Thyroid gland (tissue), 4 donors: ENCODE measurements at regions of chr16 and their contacts with region 1.

Region 1: GRCh38 chr16:84511180-84511824 is 6.8 kb upstream of the MEAK7 start:
- DNase-seq: peak; percentile 77 to 88
- H3K4me3 ChIP-seq: no peak overlapping the region
- H3K27ac ChIP-seq: no peak overlapping the region
- H3K4me1 ChIP-seq: no peaks in the 10 kb centered on the region
- H3K27me3 ChIP-seq: no peaks in the 10 kb centered on the region
- CTCF ChIP-seq: peak; percentile 88 to 96 (median 96)
- POLR2A ChIP-seq: no peak

Region 2: GRCh38 chr16:84323621-84324020 is 187.7 kb before region 1 on chr16:
- intact Hi-C with region 1: no loop called
- DNase-seq: no peak
- H3K4me3 ChIP-seq: no peak overlapping the region
- H3K27ac ChIP-seq: no peak overlapping the region
- H3K4me1 ChIP-seq: no peaks in the 10 kb centered on the region
- H3K27me3 ChIP-seq: no peaks in the 10 kb centered on the region
- CTCF ChIP-seq: no peak
- POLR2A ChIP-seq: no peak

Region 3: DNA sequence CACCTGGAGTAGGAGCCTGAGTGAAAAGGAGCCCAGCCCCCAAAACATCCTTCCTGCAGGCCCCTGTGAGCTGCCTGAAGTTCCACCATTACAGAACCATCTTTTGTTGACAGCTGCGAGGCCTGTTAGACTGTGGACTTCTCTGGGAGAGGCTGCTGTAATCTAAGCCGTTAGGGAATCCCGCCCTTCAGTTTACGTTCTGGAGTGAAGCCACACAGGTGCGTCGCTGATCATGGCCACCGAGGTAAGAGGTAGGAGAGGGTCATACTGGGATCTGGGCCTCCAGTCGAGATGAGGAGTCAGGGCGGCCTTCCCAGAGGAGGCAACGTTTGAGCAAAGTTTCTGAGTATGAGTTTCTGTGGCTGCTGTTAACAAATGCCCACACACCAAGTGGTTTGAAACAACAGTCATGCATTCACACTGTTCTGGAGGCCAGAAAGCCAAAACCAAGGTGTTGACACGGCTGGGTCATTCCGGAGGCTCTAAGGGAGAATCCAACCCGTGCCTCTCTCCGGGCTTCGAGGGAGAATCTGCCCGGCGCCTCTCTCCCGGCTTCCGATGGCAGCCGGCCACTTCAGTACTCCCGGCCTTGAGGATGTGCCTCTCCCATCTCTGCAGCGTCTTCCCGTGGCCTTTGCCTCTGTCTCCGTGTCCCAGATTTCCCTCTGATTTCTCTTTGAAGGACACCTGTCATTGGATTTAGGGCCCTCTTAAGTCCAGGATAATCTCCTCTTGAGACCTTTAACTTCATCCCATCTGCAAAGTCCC is 169.6 kb before region 1 on chr16:
- intact Hi-C with region 1: no loop called
- DNase-seq: no peak
- H3K4me3 ChIP-seq: no peak overlapping the region
- H3K27ac ChIP-seq: no peak overlapping the region
- H3K4me1 ChIP-seq: no peaks in the 10 kb centered on the region
- H3K27me3 ChIP-seq: no peaks in the 10 kb centered on the region
- CTCF ChIP-seq: no peak
- POLR2A ChIP-seq: no peak

Region 4: GRCh38 chr16:84459941-84460405 is 51.3 kb before region 1 on chr16:
- intact Hi-C with region 1: no loop called
- DNase-seq: no peak
- H3K4me3 ChIP-seq: no peak overlapping the region
- H3K27ac ChIP-seq: no peak overlapping the region
- H3K4me1 ChIP-seq: no peaks in the 10 kb centered on the region
- H3K27me3 ChIP-seq: no peaks in the 10 kb centered on the region
- CTCF ChIP-seq: no peak
- POLR2A ChIP-seq: no peak

Region 5: GRCh38 chr16:84548971-84549844 is 37.9 kb after region 1 on chr16:
- intact Hi-C with region 1: no loop called
- DNase-seq: peak in 1 of 2 donors; percentile 26
- H3K4me3 ChIP-seq: no peak overlapping the region
- H3K27ac ChIP-seq: peak overlapping the region; percentile 47 to 65 (median 56)
- H3K4me1 ChIP-seq: no peaks in the 10 kb centered on the region
- H3K27me3 ChIP-seq: no peaks in the 10 kb centered on the region
- CTCF ChIP-seq: no peak
- POLR2A ChIP-seq: no peak

Region 6: GRCh38 chr16:84617791-84618580 is 106.7 kb after region 1 on chr16 and contains the start of gene COTL1:
- intact Hi-C with region 1: loop called (anchors 2 kb)
- DNase-seq: peak; percentile 96 to 98
- H3K4me3 ChIP-seq: peak within 1 kb of the TSS; percentile 66 to 77 (median 75)
- H3K27ac ChIP-seq: peak within 1 kb of the TSS; percentile 52 to 75 (median 73)
- H3K4me1 ChIP-seq: peaks cover 24 to 36% of the 10 kb centered on the region in 2 donors
- H3K27me3 ChIP-seq: no peaks in the 10 kb centered on the region
- CTCF ChIP-seq: peak in 1 of 6 experiments; percentile 8
- POLR2A ChIP-seq: peak; percentile 83 to 97
- total RNA-seq, gene COTL1: 26.0 to 39.7 (median 31.4) TPM

Region 7: DNA sequence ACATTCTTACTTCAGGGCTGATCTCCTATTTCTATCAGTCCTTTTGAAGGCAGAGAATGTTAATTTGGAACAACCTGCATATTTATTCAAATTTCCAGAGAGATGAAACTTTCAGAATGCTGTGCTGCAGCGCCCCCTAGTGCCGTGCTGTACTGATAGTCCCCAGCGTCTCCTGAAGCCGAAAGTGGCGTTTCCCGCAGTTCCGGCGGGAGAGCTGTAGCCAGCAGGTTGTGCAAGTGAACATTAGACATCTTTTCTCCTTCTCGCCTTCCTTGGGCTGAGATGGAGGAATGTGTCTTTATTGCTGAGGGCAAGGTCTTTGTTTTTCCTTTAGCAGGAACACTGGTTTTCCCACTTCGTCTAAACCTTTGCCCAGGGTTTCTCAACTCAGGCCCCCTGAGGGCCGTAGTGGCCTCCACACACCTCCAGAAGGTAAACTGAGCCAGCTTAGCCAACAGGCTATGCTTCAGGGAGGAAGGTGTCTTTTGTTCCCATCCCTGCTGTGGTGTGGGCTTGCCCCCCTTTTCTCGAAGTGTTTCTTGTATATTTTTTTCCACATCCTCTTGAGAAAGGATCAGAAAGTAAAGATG is 214.9 kb after region 1 on chr16:
- intact Hi-C with region 1: loop called (anchors 5 kb)
- DNase-seq: peak; percentile 90 to 93
- H3K4me3 ChIP-seq: no peak overlapping the region
- H3K27ac ChIP-seq: no peak overlapping the region
- H3K4me1 ChIP-seq: peaks cover 21 to 31% of the 10 kb centered on the region in 2 donors
- H3K27me3 ChIP-seq: no peaks in the 10 kb centered on the region
- CTCF ChIP-seq: peak; percentile 79 to 93 (median 90)
- POLR2A ChIP-seq: no peak

Region 8: DNA sequence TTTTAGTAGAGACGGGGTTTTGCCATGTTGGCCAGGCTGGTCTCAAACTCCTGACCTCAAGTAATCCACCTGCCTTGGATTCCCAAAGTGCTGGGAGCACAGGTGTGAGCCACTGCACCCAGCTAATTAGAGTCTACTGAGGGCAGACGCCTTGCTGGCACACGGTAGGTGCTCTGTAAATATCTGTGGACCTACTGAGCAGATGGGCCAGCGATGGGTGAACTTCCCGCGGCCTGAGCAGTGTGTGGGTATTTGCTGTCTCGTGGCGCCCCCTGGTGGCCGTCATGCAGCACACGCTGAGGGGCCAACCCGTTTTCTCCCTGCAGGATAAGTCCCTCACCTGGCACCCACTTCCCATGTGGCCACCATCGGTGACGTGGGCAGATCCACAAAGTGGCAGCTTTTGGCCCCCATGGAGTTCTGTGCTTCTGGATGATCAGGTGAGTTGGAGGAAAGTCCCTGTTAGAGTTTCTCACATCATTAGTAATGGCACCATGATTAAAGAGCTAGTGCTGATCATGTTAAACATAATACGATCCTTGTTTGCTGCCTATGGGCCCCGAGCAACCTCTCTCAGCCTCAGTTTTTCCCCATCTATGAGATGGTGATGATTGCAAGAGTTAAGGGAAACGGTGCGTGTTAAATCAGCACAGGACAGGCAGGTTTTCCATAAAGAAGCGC is 459.3 kb after region 1 on chr16:
- intact Hi-C with region 1: loop called (anchors 10 kb)
- DNase-seq: peak; percentile 75 to 85
- H3K4me3 ChIP-seq: no peak overlapping the region
- H3K27ac ChIP-seq: no peak overlapping the region
- H3K4me1 ChIP-seq: peaks cover 20 to 27% of the 10 kb centered on the region in 2 donors
- H3K27me3 ChIP-seq: no peaks in the 10 kb centered on the region
- CTCF ChIP-seq: peak; percentile 83 to 94 (median 88)
- POLR2A ChIP-seq: no peak